Endothelial cell of umbilical vein (primary cell): ENCODE measurements at regions of chr5 and their contacts with region 1.

Region 1: GRCh38 chr5:35963381-35963843 is 25.0 kb upstream of the CAPSL start:
- DNase-seq: no peak
- H3K4me3 ChIP-seq: no peak overlapping the region
- H3K27ac ChIP-seq: no peak overlapping the region
- H3K4me1 ChIP-seq: no peaks in the 10 kb centered on the region
- H3K27me3 ChIP-seq: peaks cover 0 to 3% of the 10 kb centered on the region in 2 experiments
- CTCF ChIP-seq: peak; percentile 24 to 64
- POLR2A ChIP-seq: no peak

Region 2: GRCh38 chr5:36305571-36306326 is 342.3 kb after region 1 on chr5:
- CTCF ChIA-PET with region 1: no interaction called
- POLR2A ChIA-PET with region 1: no interaction called
- dilution Hi-C with region 1: no loop called
- intact Hi-C with region 1: loop called (anchors 10 kb)
- DNase-seq: peak; percentile 61
- H3K4me3 ChIP-seq: no peak overlapping the region
- H3K27ac ChIP-seq: no peak overlapping the region
- H3K4me1 ChIP-seq: no peaks in the 10 kb centered on the region
- H3K27me3 ChIP-seq: peaks cover 6 to 9% of the 10 kb centered on the region in 2 experiments
- CTCF ChIP-seq: peak; percentile 58 to 59
- POLR2A ChIP-seq: no peak

Region 3: DNA sequence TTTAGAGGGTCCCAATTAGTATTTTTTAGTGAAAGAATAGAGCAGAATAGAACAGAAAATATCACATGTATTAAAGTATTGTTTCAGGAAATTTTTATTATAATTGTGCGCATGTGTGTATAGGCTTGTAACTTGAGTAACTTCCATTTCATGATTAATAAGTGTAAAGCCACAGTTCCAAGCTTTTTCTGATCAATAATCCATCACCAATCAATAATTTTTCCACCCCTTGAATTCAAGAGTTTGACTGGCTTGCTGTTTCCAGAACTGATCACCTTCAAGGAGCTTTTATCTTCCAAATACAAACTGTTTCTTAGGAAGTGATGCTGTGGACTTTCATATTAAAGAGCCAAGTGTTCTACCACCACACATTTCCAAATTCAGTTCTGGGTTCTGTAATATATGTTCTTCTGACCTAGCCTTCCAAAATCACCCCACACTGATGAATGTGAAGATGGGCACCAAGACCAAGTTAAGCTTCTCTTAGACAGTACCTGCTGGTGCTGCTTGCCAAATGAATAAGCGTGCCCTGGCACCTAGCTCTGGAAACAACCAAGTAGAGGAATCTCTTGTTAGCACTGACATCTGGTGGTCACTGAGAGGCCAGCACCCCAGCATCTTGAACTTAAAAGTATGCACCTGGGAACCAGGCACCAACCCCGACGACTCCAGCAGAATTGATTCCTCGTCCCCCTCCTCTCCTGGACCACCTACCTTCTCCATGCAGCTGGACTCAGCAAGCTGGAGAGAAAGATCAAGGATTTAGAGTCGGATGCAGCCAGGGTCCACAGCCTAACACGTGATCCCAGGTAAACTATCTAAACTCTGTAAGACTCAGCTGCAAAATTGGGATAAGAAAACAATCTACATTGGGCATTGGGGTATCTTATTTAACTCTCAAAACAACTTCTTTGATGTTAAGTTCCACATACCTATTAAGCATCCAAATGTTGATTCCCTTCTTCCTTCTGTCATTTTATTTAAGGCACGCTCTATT is 732.6 kb after region 1 on chr5:
- CTCF ChIA-PET with region 1: interaction called, 4 read pairs
- POLR2A ChIA-PET with region 1: no interaction called
- dilution Hi-C with region 1: no loop called
- intact Hi-C with region 1: loop called (anchors 2 kb)
- DNase-seq: peak; percentile 51
- H3K4me3 ChIP-seq: no peak overlapping the region
- H3K27ac ChIP-seq: no peak overlapping the region
- H3K4me1 ChIP-seq: no peaks in the 10 kb centered on the region
- H3K27me3 ChIP-seq: peaks cover 3 to 10% of the 10 kb centered on the region in 2 experiments
- CTCF ChIP-seq: peak; percentile 59 to 72
- POLR2A ChIP-seq: no peak